HepG2 (cell line): ENCODE measurements at regions of chr11 and their contacts with region 1.

Region 1: GRCh38 chr11:34653826-34654490 is 33.1 kb downstream of the EHF start:
- DNase-seq: peak; percentile 92
- ATAC-seq: peak; percentile 84
- H3K4me3 ChIP-seq: peak overlapping the region in 2 of 3 experiments; percentile 40 to 56; a peak in 5 of 6 replicates
- H3K27ac ChIP-seq: peak overlapping the region; percentile 100
- H3K4me1 ChIP-seq: peaks cover 83% of the 10 kb centered on the region
- H3K27me3 ChIP-seq: no peaks in the 10 kb centered on the region
- CTCF ChIP-seq: peak; percentile 78
- EP300 ChIP-seq: no peak; a peak in 1 of 4 replicates
- POLR2A ChIP-seq: peak; percentile 35 to 74; a peak in 3 of 4 replicates
- RAD21 ChIP-seq: peak; percentile 72; the same call in 1 of the 2 replicates

Region 2: DNA sequence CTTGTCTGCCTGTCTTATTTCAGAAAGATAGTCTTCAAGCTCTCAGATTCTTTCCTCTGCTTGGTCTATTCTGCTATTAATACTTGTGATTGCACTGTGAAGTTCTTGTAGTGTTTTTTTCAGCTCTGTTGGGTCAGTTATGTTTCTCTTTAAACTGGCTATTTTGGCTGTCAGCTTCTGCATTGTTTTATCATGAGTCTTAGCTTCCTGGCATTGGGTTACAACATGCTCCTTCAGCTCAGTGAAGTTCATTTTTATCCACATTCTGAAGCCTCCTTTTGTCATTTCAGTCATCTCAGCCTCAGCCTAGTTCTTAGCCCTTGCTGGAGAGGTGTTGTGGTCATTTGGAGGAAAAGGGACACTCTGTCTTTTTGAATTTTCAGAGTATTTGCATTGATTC is 1653.8 kb before region 1 on chr11:
- CTCF ChIA-PET with region 1: no interaction called
- POLR2A ChIA-PET with region 1: no interaction called
- in situ Hi-C with region 1: no loop called
- intact Hi-C with region 1: no loop called
- DNase-seq: no peak
- ATAC-seq: no peak
- H3K4me3 ChIP-seq: no peak overlapping the region
- H3K27ac ChIP-seq: no peak overlapping the region
- H3K4me1 ChIP-seq: peaks cover 11% of the 10 kb centered on the region; the same call in 1 of the 2 replicates
- H3K27me3 ChIP-seq: no peaks in the 10 kb centered on the region
- CTCF ChIP-seq: no peak
- EP300 ChIP-seq: no peak
- POLR2A ChIP-seq: no peak
- RAD21 ChIP-seq: no peak

Region 3: DNA sequence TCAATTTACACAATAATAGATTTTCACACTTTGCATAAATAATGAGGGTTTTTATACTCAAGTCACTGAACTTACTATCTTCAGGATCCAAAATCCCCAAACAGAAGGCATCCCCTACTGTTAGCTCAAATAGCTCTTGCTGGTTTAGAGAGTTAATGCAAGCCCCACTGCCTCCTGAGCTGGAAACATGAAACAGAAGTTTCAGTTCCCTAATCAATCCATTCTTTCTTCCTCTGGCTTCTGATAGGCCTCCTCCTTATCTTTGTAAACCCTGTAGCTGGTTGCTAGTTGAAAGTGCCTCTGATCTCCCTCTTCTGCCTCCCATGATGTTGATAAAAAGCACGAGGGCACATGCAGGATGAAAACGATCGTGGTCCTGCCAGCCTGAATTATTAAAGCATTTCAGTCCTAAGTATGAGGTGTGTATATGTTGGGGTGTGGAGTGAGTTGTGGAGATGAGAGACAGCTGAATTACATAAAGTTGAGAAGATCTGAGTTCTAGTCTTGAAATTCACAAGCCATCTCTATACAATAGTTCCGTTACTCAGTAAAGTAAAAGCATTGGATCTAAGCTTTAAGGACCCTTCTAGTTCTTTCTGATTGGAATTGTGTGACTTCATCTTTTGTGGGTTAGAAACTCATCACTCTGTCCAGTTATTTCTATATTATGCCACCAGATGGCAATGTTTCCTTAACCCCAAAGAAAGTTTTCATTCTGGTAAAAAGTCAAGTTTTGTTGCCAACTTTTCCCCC is 68.0 kb before region 1 on chr11:
- CTCF ChIA-PET with region 1: interaction called, 3 read pairs
- POLR2A ChIA-PET with region 1: interaction called, 18 read pairs
- in situ Hi-C with region 1: no loop called
- intact Hi-C with region 1: loop called (anchors 1 kb)
- DNase-seq: peak; percentile 70
- ATAC-seq: peak; percentile 81
- H3K4me3 ChIP-seq: peak overlapping the region; percentile 10 to 56 (median 48); a peak in 4 of 6 replicates
- H3K27ac ChIP-seq: peak overlapping the region; percentile 51
- H3K4me1 ChIP-seq: peaks cover 40% of the 10 kb centered on the region
- H3K27me3 ChIP-seq: no peaks in the 10 kb centered on the region
- CTCF ChIP-seq: peak; percentile 77
- EP300 ChIP-seq: peak in 1 of 2 experiments; percentile 86; a peak in 1 of 4 replicates
- POLR2A ChIP-seq: no peak
- RAD21 ChIP-seq: peak; percentile 90

Region 4: DNA sequence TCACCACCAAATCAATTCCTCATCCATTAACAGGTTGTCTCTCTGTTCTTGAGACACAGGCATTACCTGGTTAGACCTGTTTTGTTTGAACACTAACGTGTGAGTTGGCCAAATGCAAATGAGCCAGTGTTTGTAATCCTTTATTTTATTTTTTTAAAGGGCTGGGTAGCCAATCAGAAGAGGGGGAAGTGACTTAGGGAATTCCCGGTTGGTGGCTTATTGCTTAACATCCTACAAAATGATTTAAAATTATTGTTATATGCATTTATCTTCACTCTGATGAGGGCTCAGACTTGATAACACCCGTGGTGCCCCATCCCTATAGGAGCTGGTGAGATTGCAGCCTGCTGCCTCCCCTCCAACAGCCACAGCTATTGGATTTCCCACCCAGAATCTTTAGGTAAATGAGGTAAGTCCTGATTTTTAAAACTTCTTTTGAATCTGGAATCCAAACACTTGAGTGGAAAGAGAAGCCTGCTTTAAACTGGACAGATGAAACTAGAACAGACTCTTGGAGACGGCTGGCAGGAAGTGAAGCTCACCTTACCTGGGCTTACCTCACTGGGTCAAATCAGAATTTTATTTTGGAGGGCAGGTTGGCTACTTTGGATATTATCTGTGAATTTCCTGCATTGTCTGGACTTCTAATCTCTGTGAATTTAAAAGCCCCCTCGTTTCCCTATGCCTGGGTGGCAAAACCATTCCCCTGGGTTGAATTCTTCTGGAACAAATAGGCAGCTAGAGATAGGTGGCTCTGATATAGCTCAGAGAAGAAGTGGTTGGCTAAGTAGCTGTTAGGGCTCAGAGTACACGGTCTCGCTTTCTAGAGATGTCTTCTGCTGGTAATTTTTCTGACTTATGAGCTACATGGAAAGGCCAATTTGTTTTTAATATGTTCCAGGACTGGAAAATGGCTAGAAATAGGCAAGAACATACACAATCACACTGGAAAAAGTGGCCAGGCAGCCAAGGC is 32.9 kb before region 1 on chr11 and contains the start of gene EHF:
- CTCF ChIA-PET with region 1: no interaction called
- POLR2A ChIA-PET with region 1: no interaction called
- in situ Hi-C with region 1: no loop called
- intact Hi-C with region 1: no loop called
- DNase-seq: no peak
- ATAC-seq: no peak
- H3K4me3 ChIP-seq: no peak within 1 kb of the TSS
- H3K27ac ChIP-seq: no peak within 1 kb of the TSS
- H3K4me1 ChIP-seq: peaks cover 23% of the 10 kb centered on the region
- H3K27me3 ChIP-seq: no peaks in the 10 kb centered on the region
- CTCF ChIP-seq: no peak
- EP300 ChIP-seq: no peak
- POLR2A ChIP-seq: no peak
- RAD21 ChIP-seq: no peak
- total RNA-seq, gene EHF: 0.24 and 0.46 TPM in 2 replicates

Region 5: GRCh38 chr11:34633990-34634693 is 19.8 kb before region 1 on chr11:
- CTCF ChIA-PET with region 1: no interaction called
- POLR2A ChIA-PET with region 1: interaction called, 145 read pairs
- in situ Hi-C with region 1: no loop called
- intact Hi-C with region 1: no loop called
- DNase-seq: peak; percentile 45
- ATAC-seq: peak; percentile 93
- H3K4me3 ChIP-seq: peak overlapping the region in 2 of 3 experiments; percentile 11 to 29; a peak in 3 of 6 replicates
- H3K27ac ChIP-seq: peak overlapping the region; percentile 21
- H3K4me1 ChIP-seq: peaks cover 61% of the 10 kb centered on the region
- H3K27me3 ChIP-seq: no peaks in the 10 kb centered on the region
- CTCF ChIP-seq: 0 out of 2 replicates have a peak, but pooled peaks have one; percentile 4
- EP300 ChIP-seq: no peak
- POLR2A ChIP-seq: no peak
- RAD21 ChIP-seq: no peak

Region 6: DNA sequence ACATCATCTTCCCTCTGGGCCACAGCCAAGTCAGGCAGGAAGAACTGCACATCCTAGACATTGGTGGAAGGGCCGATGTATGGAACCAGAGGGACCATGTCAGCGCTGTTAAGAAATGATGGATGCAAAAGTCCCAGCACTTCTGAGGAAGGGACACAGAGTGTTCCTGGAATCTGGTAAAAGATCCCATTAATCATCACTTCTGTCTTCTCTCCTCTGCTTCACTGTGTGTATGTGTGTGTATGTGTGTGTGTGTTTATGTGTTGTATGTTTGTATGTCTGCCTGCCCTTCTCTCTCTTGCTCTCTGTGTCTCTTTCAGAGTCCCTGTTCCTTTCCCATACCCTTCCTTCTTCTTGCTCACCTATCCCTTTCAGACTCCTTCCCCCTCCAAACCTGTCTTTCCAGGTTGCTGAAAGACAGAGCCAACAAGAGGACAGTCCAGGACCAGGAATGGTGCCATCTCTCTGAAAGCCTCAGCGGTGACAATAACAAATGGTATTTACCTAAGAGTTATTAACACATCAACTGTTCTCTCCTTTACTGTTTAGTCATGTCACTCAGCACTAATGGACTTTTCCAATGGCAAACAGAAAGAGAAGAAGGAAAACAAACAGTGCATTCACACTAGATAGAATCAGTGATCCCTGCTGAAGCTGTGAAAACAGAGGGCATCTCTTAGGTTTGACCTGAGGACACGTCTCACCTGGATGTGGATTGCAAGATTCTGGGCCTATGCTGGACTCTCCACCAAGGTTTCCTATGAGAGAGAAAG is 14.0 kb after region 1 on chr11:
- CTCF ChIA-PET with region 1: no interaction called
- POLR2A ChIA-PET with region 1: interaction called, 50 read pairs
- in situ Hi-C with region 1: no loop called
- intact Hi-C with region 1: no loop called
- DNase-seq: peak; percentile 96
- ATAC-seq: peak; percentile 91
- H3K4me3 ChIP-seq: no peak overlapping the region; a peak in 1 of 6 replicates
- H3K27ac ChIP-seq: peak overlapping the region; percentile 56
- H3K4me1 ChIP-seq: peaks cover 85% of the 10 kb centered on the region
- H3K27me3 ChIP-seq: no peaks in the 10 kb centered on the region
- CTCF ChIP-seq: no peak; the same call in 1 of the 2 replicates
- EP300 ChIP-seq: peak in 1 of 2 experiments; percentile 96; a peak in 2 of 4 replicates
- POLR2A ChIP-seq: no peak
- RAD21 ChIP-seq: no peak

Region 7: GRCh38 chr11:34696862-34697261 is 42.9 kb after region 1 on chr11:
- CTCF ChIA-PET with region 1: no interaction called
- POLR2A ChIA-PET with region 1: no interaction called
- in situ Hi-C with region 1: no loop called
- intact Hi-C with region 1: no loop called
- DNase-seq: no peak
- ATAC-seq: no peak
- H3K4me3 ChIP-seq: no peak overlapping the region
- H3K27ac ChIP-seq: no peak overlapping the region
- H3K4me1 ChIP-seq: no peaks in the 10 kb centered on the region
- H3K27me3 ChIP-seq: no peaks in the 10 kb centered on the region
- CTCF ChIP-seq: no peak
- EP300 ChIP-seq: no peak
- POLR2A ChIP-seq: no peak
- RAD21 ChIP-seq: no peak

Region 8: DNA sequence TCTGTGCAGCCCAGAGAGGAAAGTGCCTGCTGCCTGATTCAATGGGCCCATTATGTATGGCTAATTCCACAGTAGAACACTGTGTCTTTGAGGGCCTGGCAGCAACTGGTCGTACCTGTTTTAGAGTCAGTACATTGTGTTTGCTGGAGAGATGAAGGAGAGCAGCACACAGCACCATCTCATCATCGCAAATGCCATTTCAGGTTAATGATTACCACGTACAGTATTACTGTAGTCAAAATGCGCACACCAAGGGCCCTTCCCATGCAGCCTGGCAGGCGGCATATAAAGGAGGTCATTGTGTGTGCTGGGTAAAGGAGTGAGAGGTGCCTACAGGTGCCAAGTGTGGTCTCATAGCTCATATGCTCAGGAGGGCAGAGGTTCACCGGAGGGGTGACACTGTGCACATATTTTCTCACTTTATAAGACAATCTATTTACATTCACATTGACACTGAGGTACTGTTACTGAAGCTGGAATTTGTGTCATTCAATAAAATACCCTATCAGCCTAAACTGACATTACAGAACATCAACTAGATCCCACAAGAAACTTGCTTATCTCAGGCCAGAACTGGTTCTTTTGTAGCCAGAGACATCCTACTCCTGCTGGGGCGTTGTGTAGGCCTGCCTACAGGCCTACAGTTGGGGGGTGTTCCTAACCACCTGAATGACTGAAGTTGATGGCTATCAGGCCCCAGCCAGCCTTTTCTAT is 171.9 kb after region 1 on chr11:
- CTCF ChIA-PET with region 1: no interaction called
- POLR2A ChIA-PET with region 1: interaction called, 4 read pairs
- in situ Hi-C with region 1: no loop called
- intact Hi-C with region 1: loop called (anchors 1 kb)
- DNase-seq: peak; percentile 99
- ATAC-seq: peak; percentile 96
- H3K4me3 ChIP-seq: peak overlapping the region in 2 of 3 experiments; percentile 15 to 38; a peak in 2 of 6 replicates
- H3K27ac ChIP-seq: peak overlapping the region; percentile 92
- H3K4me1 ChIP-seq: peaks cover 62% of the 10 kb centered on the region
- H3K27me3 ChIP-seq: no peaks in the 10 kb centered on the region
- CTCF ChIP-seq: no peak
- EP300 ChIP-seq: peak; percentile 36 to 73; a peak in 2 of 4 replicates
- POLR2A ChIP-seq: peak; percentile 33 to 70; a peak in 2 of 4 replicates
- RAD21 ChIP-seq: peak; percentile 8; the same call in 1 of the 2 replicates

Region 9: DNA sequence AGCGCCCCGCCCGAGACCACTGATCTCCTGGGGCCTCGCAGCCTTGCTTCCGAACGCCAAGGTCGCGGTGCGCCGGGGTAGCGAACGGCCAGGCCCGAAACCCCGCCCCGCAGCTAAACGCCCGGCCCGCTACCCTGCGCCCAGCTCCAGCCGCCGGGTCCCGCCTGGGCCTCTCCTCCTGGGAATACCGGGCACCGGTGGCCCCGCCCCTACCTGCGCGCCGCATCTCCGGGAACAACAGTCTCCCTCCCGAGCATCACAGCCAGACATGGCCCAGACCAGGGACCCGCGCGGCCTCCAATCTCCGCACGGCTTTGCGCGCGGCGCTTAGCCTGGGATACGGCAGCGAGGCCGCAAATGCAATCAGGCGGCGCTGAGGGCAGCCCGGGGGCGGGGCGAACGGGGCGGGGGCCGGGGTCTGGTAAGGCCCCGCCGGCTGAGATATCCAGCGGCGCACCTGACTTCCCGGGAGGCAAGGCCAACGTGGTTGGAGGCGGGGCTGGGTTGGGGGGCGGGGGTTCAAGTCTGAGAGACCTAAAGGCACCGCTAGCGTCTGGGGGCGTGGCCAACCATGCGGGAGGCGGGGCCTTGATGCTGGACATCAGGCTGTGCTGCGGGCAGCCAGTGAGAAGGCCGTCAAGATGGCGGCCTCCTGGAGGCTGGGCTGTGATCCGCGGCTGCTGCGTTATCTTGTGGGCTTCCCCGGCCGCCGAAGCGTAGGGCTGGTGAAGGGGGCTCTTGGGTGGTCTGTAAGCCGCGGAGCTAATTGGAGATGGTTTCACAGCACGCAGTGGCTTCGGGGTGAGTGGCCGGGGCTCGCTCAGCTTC is 262.3 kb after region 1 on chr11 and contains the starts of genes APIP and PDHX:
- CTCF ChIA-PET with region 1: no interaction called
- POLR2A ChIA-PET with region 1: interaction called, 12 read pairs
- in situ Hi-C with region 1: no loop called
- intact Hi-C with region 1: no loop called
- DNase-seq: peak; percentile 94
- ATAC-seq: peak; percentile 95
- H3K4me3 ChIP-seq: peak within 1 kb of the TSS; percentile 89 to 100 (median 98)
- H3K27ac ChIP-seq: peak within 1 kb of the TSS; percentile 99
- H3K4me1 ChIP-seq: peaks cover 52% of the 10 kb centered on the region
- H3K27me3 ChIP-seq: no peaks in the 10 kb centered on the region; a peak in 1 of 5 replicates
- CTCF ChIP-seq: no peak; the same call in 1 of the 2 replicates
- EP300 ChIP-seq: no peak
- POLR2A ChIP-seq: peak; percentile 94 to 96
- RAD21 ChIP-seq: 0 out of 2 replicates have a peak, but pooled peaks have one; percentile 27
- total RNA-seq, gene APIP: 31.0 and 41.8 TPM in 2 replicates
- total RNA-seq, gene PDHX: 73.8 and 106 TPM in 2 replicates